ENCODE measurements at regions of chr4 and their contacts with region 1.

Region 1: DNA sequence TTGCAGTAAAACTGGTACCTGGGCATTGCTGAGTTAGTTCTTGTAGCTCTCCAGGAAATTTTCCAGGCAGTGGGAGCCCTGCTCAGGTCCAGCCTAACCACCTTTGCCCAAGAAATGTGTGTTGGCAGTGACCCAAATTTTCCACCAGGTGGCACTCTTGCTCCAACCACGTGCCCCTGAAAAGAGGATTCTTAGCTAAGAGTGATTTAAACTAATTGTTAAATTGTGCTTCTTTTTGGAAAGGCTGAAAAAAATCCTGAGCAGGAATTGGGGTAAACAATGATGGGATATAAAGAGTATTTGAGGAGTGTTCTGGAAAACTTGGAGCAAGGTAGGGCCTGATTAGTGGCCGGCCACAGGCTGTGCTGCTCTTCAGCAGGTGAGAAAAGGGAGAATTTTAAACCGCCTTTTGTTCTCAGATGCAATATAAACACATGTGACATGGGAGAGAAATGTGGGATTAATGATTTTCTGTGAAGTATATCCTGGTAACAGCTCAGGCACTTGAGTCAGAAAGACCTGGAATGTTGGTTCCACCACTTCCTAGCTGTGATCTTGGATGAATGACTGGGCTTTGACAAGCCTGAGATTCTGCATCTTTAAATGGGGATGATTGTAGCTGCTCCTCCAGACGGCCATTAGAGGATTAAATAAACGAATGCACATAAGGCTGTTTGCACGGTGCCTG is 219.6 kb downstream of the PTTG2 start:
- DNase-seq: peak; percentile 82
- ATAC-seq: peak; percentile 65
- H3K4me3 Mint-ChIP-seq: no peak overlapping the region
- H3K27ac Mint-ChIP-seq: no peak overlapping the region
- H3K4me1 Mint-ChIP-seq: peaks cover 33% of the 10 kb centered on the region
- H3K27me3 Mint-ChIP-seq: no peaks in the 10 kb centered on the region
- CTCF ChIP-seq: peak; percentile 96

Region 2: GRCh38 chr4:38069271-38069760 is 110.5 kb before region 1 on chr4:
- CTCF ChIA-PET with region 1: interaction called, 13 read pairs
- POLR2A ChIA-PET with region 1: no interaction called
- intact Hi-C with region 1: loop called (anchors 5 kb)
- DNase-seq: peak; percentile 26
- ATAC-seq: peak; percentile 79
- H3K4me3 Mint-ChIP-seq: no peak overlapping the region
- H3K27ac Mint-ChIP-seq: no peak overlapping the region
- H3K4me1 Mint-ChIP-seq: peaks cover 19% of the 10 kb centered on the region
- H3K27me3 Mint-ChIP-seq: no peaks in the 10 kb centered on the region
- CTCF ChIP-seq: no peak

Region 3: DNA sequence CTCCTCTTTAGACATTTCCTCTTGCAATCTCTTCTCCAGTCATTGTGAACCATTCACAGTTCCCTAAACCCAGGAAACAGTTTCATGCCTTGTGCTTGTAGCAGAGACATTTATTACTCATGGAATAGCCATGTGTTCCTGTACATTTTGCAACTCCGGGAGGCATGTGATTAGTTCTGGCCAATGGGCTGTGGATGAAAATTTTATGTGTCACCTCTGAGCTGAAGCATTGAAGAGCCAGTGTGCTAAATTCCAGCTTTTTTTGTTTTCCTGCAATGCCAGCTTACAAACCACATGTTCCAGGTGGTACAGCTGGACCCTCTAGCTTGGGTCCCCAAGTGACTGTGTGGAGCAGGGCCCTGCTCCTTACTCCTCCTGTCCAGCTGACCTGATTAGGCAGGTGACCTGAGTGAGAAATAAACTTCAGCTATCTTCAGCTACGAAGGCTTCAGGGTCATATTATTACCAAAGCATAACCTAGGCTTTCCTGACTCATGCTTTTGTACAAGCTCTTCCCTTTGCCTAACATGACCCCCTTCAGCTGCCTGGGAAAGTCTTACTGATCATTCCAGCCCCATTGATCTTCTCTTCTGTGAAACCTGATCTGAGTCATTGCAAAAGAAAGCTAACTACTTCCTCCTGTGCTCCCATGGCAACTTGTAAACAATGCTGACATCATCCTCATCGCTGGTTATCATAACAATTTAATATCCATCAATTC is 19.2 kb before region 1 on chr4:
- CTCF ChIA-PET with region 1: interaction called, 22 read pairs
- POLR2A ChIA-PET with region 1: interaction called, 4 read pairs
- intact Hi-C with region 1: no loop called
- DNase-seq: peak; percentile 68
- ATAC-seq: peak; percentile 72
- H3K4me3 Mint-ChIP-seq: no peak overlapping the region
- H3K27ac Mint-ChIP-seq: peak overlapping the region; percentile 59
- H3K4me1 Mint-ChIP-seq: peaks cover 60% of the 10 kb centered on the region
- H3K27me3 Mint-ChIP-seq: no peaks in the 10 kb centered on the region
- CTCF ChIP-seq: no peak

Region 4: GRCh38 chr4:38310446-38311043 is 130.7 kb after region 1 on chr4:
- CTCF ChIA-PET with region 1: interaction called, 20 read pairs
- POLR2A ChIA-PET with region 1: interaction called, 4 read pairs
- intact Hi-C with region 1: loop called (anchors 5 kb)
- DNase-seq: peak; percentile 90
- ATAC-seq: peak; percentile 81
- H3K4me3 Mint-ChIP-seq: peak overlapping the region; percentile 34
- H3K27ac Mint-ChIP-seq: peak overlapping the region; percentile 81
- H3K4me1 Mint-ChIP-seq: peaks cover 68% of the 10 kb centered on the region
- H3K27me3 Mint-ChIP-seq: peaks cover 3% of the 10 kb centered on the region
- CTCF ChIP-seq: no peak

Region 5: GRCh38 chr4:38663801-38664705 is 484.2 kb after region 1 on chr4 and contains the start of gene KLF3:
- CTCF ChIA-PET with region 1: interaction called, 13 read pairs
- POLR2A ChIA-PET with region 1: no interaction called
- intact Hi-C with region 1: no loop called
- DNase-seq: peak; percentile 68
- ATAC-seq: peak; percentile 64
- H3K4me3 Mint-ChIP-seq: peak within 1 kb of the TSS; percentile 79
- H3K27ac Mint-ChIP-seq: peak within 1 kb of the TSS; percentile 89
- H3K4me1 Mint-ChIP-seq: peaks cover 63% of the 10 kb centered on the region
- H3K27me3 Mint-ChIP-seq: no peaks in the 10 kb centered on the region
- CTCF ChIP-seq: no peak
- total RNA-seq, gene KLF3: 5.5 to 6.0 TPM

Region 6: GRCh38 chr4:38723726-38724474 is 544.1 kb after region 1 on chr4:
- CTCF ChIA-PET with region 1: interaction called, 136 read pairs
- POLR2A ChIA-PET with region 1: no interaction called
- intact Hi-C with region 1: no loop called
- DNase-seq: no peak
- ATAC-seq: no peak
- H3K4me3 Mint-ChIP-seq: no peak overlapping the region
- H3K27ac Mint-ChIP-seq: no peak overlapping the region
- H3K4me1 Mint-ChIP-seq: peaks cover 4% of the 10 kb centered on the region
- H3K27me3 Mint-ChIP-seq: peaks cover 2% of the 10 kb centered on the region
- CTCF ChIP-seq: no peak

Region 7: DNA sequence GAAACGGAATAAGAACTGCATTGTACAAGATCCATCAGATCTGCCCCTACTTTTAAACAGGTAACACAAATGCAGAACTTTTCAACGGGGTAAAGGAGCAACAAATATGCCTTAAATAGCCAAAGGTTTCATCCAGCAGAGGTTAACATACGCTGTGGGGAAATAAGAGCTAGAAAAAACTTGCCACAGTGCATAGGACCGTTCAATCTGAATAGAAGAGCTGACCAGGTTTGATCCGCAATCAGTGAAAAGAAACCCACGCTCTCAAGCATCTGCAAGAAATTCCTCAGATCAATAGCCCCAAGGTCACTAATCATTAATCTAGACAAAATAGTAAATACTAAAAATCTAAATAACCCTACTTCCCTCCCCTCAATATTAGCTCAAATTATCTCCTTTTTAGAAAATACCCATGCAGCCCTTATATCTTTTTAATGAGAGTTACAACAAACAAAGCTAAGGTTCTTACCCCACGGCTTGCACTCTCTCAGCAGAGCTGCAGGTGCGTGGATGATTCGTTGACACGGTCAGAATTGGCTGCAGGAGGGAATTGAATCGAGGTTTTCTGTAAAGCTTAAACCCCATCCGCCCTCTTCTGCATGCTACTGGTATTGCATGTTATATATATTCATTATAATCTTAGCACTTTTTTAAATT is 602.7 kb after region 1 on chr4 and contains the start of gene TLR10:
- CTCF ChIA-PET with region 1: interaction called, 10 read pairs
- POLR2A ChIA-PET with region 1: no interaction called
- intact Hi-C with region 1: no loop called
- DNase-seq: peak; percentile 57
- ATAC-seq: peak; percentile 92
- H3K4me3 Mint-ChIP-seq: no peak within 1 kb of the TSS
- H3K27ac Mint-ChIP-seq: no peak within 1 kb of the TSS
- H3K4me1 Mint-ChIP-seq: peaks cover 4% of the 10 kb centered on the region
- H3K27me3 Mint-ChIP-seq: no peaks in the 10 kb centered on the region
- CTCF ChIP-seq: peak; percentile 76
- total RNA-seq, gene TLR10: 0.11 to 0.22 TPM

Measured in activated CD8-positive, alpha-beta T cell treated with anti-CD3 and anti-CD28 coated beads for 36 hours (primary cell).